ENCODE measurements at regions of chr3 and their contacts with region 1.

Region 1: DNA sequence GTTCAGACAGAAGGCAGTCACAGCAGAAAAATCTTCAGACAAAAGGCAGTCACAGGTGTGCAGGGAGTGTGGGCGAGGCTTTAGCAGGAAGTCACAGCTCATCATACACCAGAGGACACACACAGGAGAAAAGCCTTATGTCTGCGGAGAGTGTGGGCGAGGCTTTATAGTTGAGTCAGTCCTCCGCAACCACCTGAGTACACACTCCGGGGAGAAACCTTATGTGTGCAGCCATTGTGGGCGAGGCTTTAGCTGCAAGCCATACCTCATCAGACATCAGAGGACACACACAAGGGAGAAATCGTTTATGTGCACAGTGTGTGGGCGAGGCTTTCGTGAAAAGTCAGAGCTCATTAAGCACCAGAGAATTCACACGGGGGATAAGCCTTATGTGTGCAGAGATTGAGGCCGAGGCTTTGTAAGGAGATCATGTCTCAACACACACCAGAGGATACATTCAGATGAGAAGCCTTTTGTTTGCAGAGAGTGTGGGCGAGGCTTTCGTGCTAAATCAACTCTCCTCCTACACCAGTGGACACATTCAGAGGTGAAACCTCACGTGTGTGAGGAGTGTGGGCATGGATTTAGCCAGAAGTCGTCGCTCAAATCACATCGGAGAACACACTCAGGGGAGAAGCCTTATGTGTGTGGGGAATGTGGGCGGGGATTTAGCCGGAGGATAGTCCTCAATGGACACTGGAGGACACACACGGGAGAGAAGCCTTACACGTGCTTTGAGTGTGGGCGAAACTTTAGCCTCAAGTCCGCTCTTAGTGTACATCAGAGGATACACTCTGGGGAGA is 27.7 kb downstream of the ZNF589 start:
- DNase-seq: peak; percentile 46 to 92 (median 76)
- ATAC-seq: peak; percentile 97
- H3K4me3 ChIP-seq: peak overlapping the region; percentile 2 to 32
- H3K4me3 Mint-ChIP-seq: peak overlapping the region; percentile 75
- H3K27ac ChIP-seq: peak overlapping the region; percentile 40 to 45
- H3K27ac Mint-ChIP-seq: peak overlapping the region; percentile 94
- H3K4me1 ChIP-seq: peaks cover 16% of the 10 kb centered on the region
- H3K4me1 Mint-ChIP-seq: peaks cover 33% of the 10 kb centered on the region
- H3K27me3 ChIP-seq: no peaks in the 10 kb centered on the region
- H3K27me3 Mint-ChIP-seq: no peaks in the 10 kb centered on the region
- CTCF ChIP-seq: no peak

Region 2: DNA sequence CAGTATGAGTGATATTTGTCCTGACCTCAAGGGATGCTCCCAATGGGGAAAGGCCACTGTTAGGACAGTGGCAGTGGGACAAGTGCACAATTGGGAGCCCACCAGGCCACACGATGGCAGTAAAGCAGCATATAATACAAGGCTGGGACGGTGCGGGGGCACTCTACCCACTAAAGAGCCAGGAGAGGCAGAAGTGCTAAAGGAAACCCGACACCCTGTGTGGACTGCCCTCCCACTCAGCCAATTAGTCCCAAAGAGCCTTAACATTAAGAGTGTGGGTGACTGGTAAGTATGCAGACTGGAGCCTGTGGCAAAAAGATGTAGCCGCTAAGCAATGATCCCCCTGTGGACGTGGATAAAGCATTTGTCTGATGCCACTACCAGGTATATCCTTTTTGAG is 35.8 kb before region 1 on chr3:
- CTCF ChIA-PET with region 1: no interaction called
- POLR2A ChIA-PET with region 1: no interaction called
- intact Hi-C with region 1: loop called (anchors 5 kb)
- DNase-seq: peak; percentile 31 to 75 (median 63)
- ATAC-seq: peak; percentile 95
- H3K4me3 ChIP-seq: no peak overlapping the region
- H3K4me3 Mint-ChIP-seq: no peak overlapping the region
- H3K27ac ChIP-seq: no peak overlapping the region
- H3K27ac Mint-ChIP-seq: peak overlapping the region; percentile 11
- H3K4me1 ChIP-seq: no peaks in the 10 kb centered on the region
- H3K4me1 Mint-ChIP-seq: peaks cover 9% of the 10 kb centered on the region
- H3K27me3 ChIP-seq: no peaks in the 10 kb centered on the region
- H3K27me3 Mint-ChIP-seq: no peaks in the 10 kb centered on the region
- CTCF ChIP-seq: peak; percentile 48

Region 3: DNA sequence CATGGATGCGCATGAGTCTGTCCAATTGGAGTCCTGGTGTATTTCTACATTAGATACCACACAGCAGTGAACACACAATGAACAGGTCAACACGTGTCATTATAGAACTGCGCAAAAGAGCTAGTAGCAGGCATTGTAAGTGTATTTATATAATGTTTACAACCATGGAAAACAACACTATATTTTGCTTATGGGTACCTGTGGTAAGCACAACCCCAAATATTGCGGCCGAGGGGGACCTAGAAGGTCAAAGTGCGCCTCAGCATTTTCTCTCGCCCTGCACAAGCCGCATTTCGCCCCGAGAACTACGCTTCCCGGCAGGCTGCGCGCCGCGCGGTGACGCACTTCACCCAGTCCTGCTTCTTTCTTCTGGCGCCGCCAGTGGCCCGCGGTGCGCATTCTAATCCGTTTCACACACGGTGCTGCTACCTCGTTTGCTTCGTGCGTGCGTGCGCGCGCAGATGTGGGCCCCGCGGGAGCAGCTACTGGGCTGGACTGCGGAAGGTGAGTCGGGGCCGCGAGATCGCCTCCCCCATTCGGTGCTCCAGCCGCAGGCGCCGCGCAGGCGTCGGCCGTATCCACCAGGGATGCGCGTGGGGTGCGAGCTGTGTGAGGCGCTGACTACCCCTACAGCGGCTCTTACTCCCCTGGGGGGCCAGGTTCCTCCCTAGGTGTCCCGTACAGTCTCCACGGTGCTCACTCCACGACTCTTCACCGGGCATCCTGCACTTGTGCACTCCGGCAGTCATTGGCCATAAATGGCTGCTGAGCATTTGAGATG is 27.7 kb before region 1 on chr3 and contains the start of gene ZNF589:
- CTCF ChIA-PET with region 1: interaction called, 4 read pairs
- POLR2A ChIA-PET with region 1: interaction called, 11 read pairs
- intact Hi-C with region 1: loop called (anchors 1 kb)
- DNase-seq: peak; percentile 91 to 97 (median 94)
- ATAC-seq: peak; percentile 97
- H3K4me3 ChIP-seq: peak within 1 kb of the TSS; percentile 66 to 90
- H3K4me3 Mint-ChIP-seq: peak within 1 kb of the TSS; percentile 92
- H3K27ac ChIP-seq: peak within 1 kb of the TSS; percentile 62 to 85
- H3K27ac Mint-ChIP-seq: peak within 1 kb of the TSS; percentile 93
- H3K4me1 ChIP-seq: peaks cover 23% of the 10 kb centered on the region
- H3K4me1 Mint-ChIP-seq: peaks cover 28% of the 10 kb centered on the region
- H3K27me3 ChIP-seq: no peaks in the 10 kb centered on the region
- H3K27me3 Mint-ChIP-seq: no peaks in the 10 kb centered on the region
- CTCF ChIP-seq: peak; percentile 31
- total RNA-seq, gene ZNF589: 18.9 to 20.9 TPM

Region 4: DNA sequence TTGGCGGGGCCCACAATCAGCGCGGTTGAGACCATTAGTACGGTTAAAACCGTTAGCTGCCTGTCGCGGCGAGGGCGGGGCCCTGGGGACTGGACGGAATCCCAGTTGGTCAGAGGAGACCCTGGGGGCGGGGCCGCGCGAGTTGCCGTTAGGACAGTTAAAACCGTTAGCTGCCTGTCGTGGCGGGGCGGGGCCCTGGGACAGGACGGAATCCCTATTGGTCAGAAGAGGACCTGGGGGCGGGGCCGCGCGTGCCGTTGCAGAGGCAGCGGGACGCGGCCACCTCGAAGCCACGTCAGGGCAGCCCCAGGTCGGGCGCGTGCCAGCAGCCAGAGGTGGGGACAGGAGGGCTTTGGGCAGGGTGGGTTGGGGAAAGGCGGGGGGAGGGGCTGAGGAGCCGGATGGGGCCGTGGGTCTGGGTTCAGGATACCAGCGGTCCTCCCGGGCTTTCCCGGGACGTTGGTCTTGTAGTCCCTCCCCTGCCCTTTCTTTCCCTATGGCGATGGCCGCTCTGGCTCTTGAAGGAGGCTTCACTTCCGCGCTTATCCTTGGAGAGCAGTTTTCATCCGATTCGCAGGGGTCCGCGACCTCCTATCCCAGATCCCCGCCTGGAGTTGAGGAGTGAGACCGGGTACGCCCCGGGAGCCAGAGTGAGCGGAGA is 930.8 kb after region 1 on chr3:
- CTCF ChIA-PET with region 1: no interaction called
- POLR2A ChIA-PET with region 1: no interaction called
- intact Hi-C with region 1: no loop called
- DNase-seq: no peak
- ATAC-seq: no peak
- H3K4me3 ChIP-seq: no peak overlapping the region
- H3K4me3 Mint-ChIP-seq: no peak overlapping the region
- H3K27ac ChIP-seq: no peak overlapping the region
- H3K27ac Mint-ChIP-seq: no peak overlapping the region
- H3K4me1 ChIP-seq: no peaks in the 10 kb centered on the region
- H3K4me1 Mint-ChIP-seq: no peaks in the 10 kb centered on the region
- H3K27me3 ChIP-seq: no peaks in the 10 kb centered on the region
- H3K27me3 Mint-ChIP-seq: peaks cover 29% of the 10 kb centered on the region
- CTCF ChIP-seq: no peak

Measured in CD8-positive, alpha-beta T cell (primary cell).